A549 (cell line): ENCODE measurements at regions of chr7 and their contacts with region 1.

Region 1: DNA sequence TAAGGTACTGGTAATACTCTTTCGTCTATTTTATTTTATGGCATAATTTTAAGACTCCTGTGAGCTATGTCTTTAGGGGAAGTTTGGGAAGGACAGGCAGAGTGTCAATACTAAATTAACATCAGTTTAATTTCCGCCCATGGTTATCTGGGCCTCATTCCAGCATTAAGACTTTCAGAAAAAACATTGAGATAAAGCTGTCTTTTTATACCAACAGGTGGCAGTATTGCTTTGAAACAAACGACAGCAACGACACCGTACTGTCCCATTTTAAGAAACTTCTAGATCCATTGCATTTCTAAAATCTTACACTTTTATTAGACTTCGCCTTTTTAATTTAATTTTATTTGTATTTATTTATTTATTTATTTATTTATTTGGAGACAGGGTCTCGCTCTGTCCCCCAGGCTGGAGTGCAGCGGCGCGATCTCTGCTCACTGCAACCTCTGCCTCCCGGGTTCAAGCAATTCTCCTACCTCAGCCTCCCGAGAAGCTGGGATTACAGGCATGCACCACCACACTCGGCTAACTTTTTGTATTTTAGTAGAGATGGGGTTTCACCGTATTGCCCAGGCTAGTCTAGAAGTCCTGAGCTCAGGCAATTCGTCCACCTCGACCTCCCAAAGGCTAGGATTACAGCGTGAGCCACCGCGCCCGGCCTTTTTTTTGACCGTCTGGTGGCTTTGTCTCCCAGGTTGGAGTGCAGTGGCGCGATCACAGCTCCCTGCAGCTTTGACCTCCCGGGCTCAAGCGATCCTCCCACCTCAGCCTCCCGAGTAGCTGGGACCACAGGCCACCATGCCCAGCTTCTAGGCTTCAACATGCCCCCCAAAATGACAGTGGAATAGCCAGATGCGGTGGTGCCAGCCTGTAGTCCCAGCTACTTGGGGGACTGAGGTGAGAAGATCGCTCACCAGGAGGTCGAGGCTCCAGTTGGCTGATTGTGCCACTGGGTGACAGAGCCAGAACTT is 78.7 kb upstream of the C1GALT1 start:
- DNase-seq: peak; percentile 46 to 66
- ATAC-seq: peak; percentile 53 to 82; a peak in 3 of 6 replicates
- H3K4me3 ChIP-seq: no peak overlapping the region
- H3K27ac ChIP-seq: peak overlapping the region in 1 of 2 experiments; percentile 33; a peak in 1 of 6 replicates
- H3K4me1 ChIP-seq: peaks cover 13% of the 10 kb centered on the region
- CTCF ChIP-seq: peak; percentile 87
- EP300 ChIP-seq: no peak
- POLR2A ChIP-seq: no peak
- RAD21 ChIP-seq: peak; percentile 84 to 90

Region 2: DNA sequence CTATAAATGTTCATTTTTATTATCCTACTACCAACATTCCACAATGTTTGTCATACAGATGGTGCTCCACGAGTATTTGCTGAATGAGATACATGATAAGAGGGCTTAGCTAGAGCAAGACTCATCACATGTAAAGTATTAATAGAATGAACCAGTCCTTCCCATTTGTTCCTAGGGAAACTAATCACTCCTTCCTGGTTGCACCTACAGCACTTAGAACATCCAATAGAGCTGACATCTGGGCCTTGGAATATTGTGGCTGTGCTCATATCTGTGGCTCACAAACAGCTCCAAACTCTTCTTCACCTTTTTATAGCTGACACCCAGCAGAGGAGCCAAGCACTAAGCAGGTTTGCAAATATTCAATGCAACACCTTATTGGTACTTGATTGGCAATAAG is 13.2 kb before region 1 on chr7:
- CTCF ChIA-PET with region 1: interaction called, 28 read pairs
- POLR2A ChIA-PET with region 1: no interaction called
- DNase-seq: no peak
- ATAC-seq: no peak
- H3K4me3 ChIP-seq: no peak overlapping the region
- H3K27ac ChIP-seq: no peak overlapping the region
- H3K4me1 ChIP-seq: no peaks in the 10 kb centered on the region
- CTCF ChIP-seq: no peak
- EP300 ChIP-seq: no peak
- POLR2A ChIP-seq: no peak
- RAD21 ChIP-seq: no peak

Region 3: DNA sequence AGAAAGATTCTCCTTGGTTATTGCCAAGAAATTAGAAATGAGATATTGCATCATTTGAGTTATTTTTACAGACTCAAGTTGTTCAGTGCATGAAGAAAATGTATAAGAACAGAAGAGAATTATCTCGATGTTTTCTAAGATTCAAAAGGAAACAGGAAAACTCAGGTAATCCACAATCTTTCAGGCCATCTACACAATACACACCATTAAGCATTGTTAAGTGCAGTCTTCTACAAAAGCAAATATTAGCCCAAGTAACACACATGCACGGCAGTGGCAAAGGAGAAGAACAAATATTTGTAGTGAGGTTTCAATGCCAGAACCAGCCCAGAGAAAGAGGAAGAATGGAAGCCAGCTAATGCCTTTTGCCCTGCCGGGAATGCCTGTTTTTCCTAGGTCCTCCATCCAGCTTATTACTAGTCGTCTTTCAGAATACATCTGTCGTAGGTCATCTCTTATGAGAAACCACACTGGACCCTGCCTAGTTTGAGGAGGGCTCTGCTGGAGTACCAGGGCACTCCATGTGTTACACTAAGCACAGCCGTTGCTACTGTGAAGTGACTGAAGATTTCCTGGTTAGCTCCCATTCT is 11.2 kb after region 1 on chr7:
- CTCF ChIA-PET with region 1: interaction called, 31 read pairs
- POLR2A ChIA-PET with region 1: no interaction called
- DNase-seq: peak in 1 of 2 experiments; percentile 24
- ATAC-seq: peak in 1 of 2 experiments; percentile 83; a peak in 3 of 6 replicates
- H3K4me3 ChIP-seq: no peak overlapping the region
- H3K27ac ChIP-seq: no peak overlapping the region
- H3K4me1 ChIP-seq: peaks cover 11% of the 10 kb centered on the region; the same call in 2 of the 3 replicates
- CTCF ChIP-seq: no peak
- EP300 ChIP-seq: no peak
- POLR2A ChIP-seq: no peak
- RAD21 ChIP-seq: no peak

Region 4: GRCh38 chr7:7176421-7177043 is 72.9 kb after region 1 on chr7:
- CTCF ChIA-PET with region 1: interaction called, 23 read pairs
- POLR2A ChIA-PET with region 1: interaction called, 15 read pairs
- DNase-seq: peak; percentile 33 to 76
- ATAC-seq: peak; percentile 88 to 91
- H3K4me3 ChIP-seq: 0 out of 3 replicates have a peak overlapping the region, but pooled peaks have one; percentile 4
- H3K27ac ChIP-seq: peak overlapping the region; percentile 68 to 84
- H3K4me1 ChIP-seq: peaks cover 45% of the 10 kb centered on the region
- CTCF ChIP-seq: no peak
- EP300 ChIP-seq: no peak
- POLR2A ChIP-seq: no peak
- RAD21 ChIP-seq: no peak

Region 5: GRCh38 chr7:7182156-7183060 is 78.8 kb after region 1 on chr7 and contains the start of gene C1GALT1:
- CTCF ChIA-PET with region 1: interaction called, 23 read pairs
- POLR2A ChIA-PET with region 1: interaction called, 15 read pairs
- DNase-seq: peak; percentile 81 to 98
- ATAC-seq: peak; percentile 88 to 92
- H3K4me3 ChIP-seq: peak within 1 kb of the TSS; percentile 72
- H3K27ac ChIP-seq: peak within 1 kb of the TSS; percentile 86 to 92
- H3K4me1 ChIP-seq: peaks cover 37% of the 10 kb centered on the region
- CTCF ChIP-seq: no peak; the same call in 1 of the 3 replicates
- EP300 ChIP-seq: no peak
- POLR2A ChIP-seq: peak; percentile 77
- RAD21 ChIP-seq: peak in 1 of 2 experiments; percentile 43; a peak in 2 of 5 replicates
- polyA plus RNA-seq, gene C1GALT1: 37.7 and 50.1 TPM in 2 replicates